ENCODE measurements at regions of chr12 and their contacts with region 1.

Region 1: DNA sequence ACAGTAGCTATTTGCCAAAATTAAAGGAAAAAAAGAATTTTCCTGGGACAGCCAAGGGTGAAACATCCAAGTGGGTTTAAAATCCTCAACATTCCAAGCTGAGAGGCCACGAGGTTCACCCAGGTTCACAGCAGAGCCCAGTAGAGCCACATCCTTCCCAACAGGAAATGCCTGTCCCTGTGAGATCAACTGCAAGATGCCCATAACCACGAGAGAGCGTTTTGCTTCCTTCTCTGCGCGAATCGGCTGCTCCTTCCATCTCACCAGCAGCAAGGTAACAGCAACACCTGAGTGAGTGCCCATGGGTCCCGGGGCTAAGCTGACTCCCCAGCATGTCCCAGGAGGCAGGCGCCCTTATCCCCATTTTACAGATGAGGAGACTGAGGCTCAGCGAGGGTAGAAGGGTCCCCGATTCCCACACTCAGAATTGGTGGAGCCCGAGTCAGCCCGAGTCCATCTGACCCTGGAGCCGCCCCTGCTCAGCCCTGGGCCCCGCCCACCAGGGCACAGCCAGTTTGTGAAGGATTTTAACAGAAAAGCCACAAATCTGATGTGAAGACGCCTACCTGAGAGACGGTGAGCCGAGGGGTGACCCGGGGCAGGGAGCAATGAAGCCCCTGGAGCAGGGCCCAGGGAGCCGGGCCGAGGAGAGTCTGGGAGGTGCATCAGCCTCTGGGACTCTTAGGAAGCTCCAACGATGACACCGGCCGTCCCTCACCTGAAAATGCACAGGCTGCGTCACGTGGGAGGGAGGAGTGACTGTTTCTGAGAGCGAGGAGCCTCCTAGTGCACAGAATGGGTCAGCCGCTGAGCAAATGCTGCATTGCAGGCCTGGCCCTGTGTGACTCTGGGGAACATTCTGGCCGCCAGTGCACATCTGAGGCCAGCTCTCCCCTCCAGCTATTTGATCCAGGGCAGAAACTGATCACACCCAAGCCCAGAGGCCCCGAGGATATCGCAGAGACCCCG is 236.9 kb upstream of the SFSWAP start:
- DNase-seq: no peak
- ATAC-seq: no peak

Region 2: GRCh38 chr12:130826149-130826801 is 647.8 kb before region 1 on chr12:
- intact Hi-C with region 1: no loop called
- DNase-seq: no peak
- ATAC-seq: peak; percentile 68 to 90

Region 3: GRCh38 chr12:131209082-131210070 is 264.6 kb before region 1 on chr12:
- intact Hi-C with region 1: loop called in 1 of 2 experiments (anchors 10 kb)
- DNase-seq: no peak
- ATAC-seq: no peak